IMR-90 (cell line): ENCODE measurements at regions of chr18 and their contacts with region 1.

Region 1: GRCh38 chr18:45839414-45840395 is 14.2 kb downstream of the SIGLEC15 start:
- DNase-seq: peak; percentile 80
- ATAC-seq: peak; percentile 81
- H3K4me3 ChIP-seq: no peak overlapping the region
- H3K27ac ChIP-seq: no peak overlapping the region
- H3K4me1 ChIP-seq: peaks cover 10% of the 10 kb centered on the region
- H3K27me3 ChIP-seq: no peaks in the 10 kb centered on the region
- CTCF ChIP-seq: peak; percentile 83
- POLR2A ChIP-seq: no peak
- RAD21 ChIP-seq: peak; percentile 90

Region 2: DNA sequence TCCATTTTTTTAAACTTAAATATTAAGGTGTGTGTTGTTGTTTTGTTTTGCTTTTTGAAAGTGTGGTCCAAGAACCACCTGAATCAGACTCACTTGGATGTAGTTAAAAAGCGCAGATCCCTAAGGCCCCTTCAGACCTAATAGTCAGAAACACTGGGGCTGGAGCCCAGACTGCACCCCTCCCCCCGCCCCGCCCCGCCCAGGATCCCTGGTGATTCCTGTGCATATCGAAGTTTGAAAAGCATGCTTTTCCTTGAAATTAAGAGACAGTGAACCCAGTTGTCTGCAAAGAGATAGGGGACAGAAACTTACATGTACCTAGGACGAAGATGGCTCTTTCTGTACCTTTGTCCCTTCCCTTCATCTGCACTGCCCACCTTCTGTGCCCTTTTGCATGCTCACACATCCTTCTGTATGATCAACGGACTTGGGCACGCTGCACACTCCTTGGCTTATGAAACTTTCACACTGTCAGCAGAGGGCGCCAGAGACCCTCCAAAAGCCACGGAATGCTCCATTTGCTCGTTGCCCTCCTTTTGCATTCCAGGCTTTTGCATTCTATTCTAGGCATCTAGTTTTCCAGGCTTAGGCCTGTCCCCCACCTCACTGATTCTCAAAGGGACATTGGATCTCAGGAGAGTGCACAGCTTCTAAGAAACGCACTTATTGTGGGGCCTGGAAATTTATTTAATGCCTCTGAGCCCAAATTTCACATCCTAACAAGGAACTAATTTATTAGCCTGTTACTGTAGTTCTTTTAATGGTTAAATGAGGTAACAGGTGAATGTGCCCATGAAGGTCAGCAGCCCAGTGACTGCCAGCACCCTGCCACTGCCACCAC is 148.5 kb before region 1 on chr18:
- CTCF ChIA-PET with region 1: interaction called, 3 read pairs
- POLR2A ChIA-PET with region 1: no interaction called
- dilution Hi-C with region 1: no loop called
- in situ Hi-C with region 1: loop called (anchors 5 kb)
- intact Hi-C with region 1: loop called (anchors 1 kb)
- DNase-seq: peak; percentile 76
- ATAC-seq: peak; percentile 86
- H3K4me3 ChIP-seq: no peak overlapping the region
- H3K27ac ChIP-seq: no peak overlapping the region
- H3K4me1 ChIP-seq: peaks cover 16% of the 10 kb centered on the region
- H3K27me3 ChIP-seq: no peaks in the 10 kb centered on the region
- CTCF ChIP-seq: peak; percentile 93
- POLR2A ChIP-seq: peak; percentile 67
- RAD21 ChIP-seq: peak; percentile 99

Region 3: GRCh38 chr18:45722899-45723298 is 116.8 kb before region 1 on chr18:
- CTCF ChIA-PET with region 1: interaction called, 4 read pairs
- POLR2A ChIA-PET with region 1: no interaction called
- dilution Hi-C with region 1: no loop called
- in situ Hi-C with region 1: no loop called
- intact Hi-C with region 1: loop called (anchors 1 kb)
- DNase-seq: peak; percentile 77
- ATAC-seq: peak; percentile 89
- H3K4me3 ChIP-seq: no peak overlapping the region
- H3K27ac ChIP-seq: no peak overlapping the region
- H3K4me1 ChIP-seq: peaks cover 14% of the 10 kb centered on the region
- H3K27me3 ChIP-seq: no peaks in the 10 kb centered on the region
- CTCF ChIP-seq: peak; percentile 83
- POLR2A ChIP-seq: 0 out of 2 replicates have a peak, but pooled peaks have one; percentile 31
- RAD21 ChIP-seq: peak; percentile 92

Region 4: GRCh38 chr18:45764000-45764686 is 75.6 kb before region 1 on chr18:
- CTCF ChIA-PET with region 1: no interaction called
- POLR2A ChIA-PET with region 1: no interaction called
- dilution Hi-C with region 1: no loop called
- in situ Hi-C with region 1: no loop called
- intact Hi-C with region 1: no loop called
- DNase-seq: peak; percentile 67
- ATAC-seq: no peak; the same call in none of the 2 replicates
- H3K4me3 ChIP-seq: no peak overlapping the region
- H3K27ac ChIP-seq: peak overlapping the region; percentile 26; the same call in 1 of the 2 replicates
- H3K4me1 ChIP-seq: peaks cover 16% of the 10 kb centered on the region
- H3K27me3 ChIP-seq: no peaks in the 10 kb centered on the region
- CTCF ChIP-seq: no peak
- POLR2A ChIP-seq: no peak
- RAD21 ChIP-seq: no peak

Region 5: DNA sequence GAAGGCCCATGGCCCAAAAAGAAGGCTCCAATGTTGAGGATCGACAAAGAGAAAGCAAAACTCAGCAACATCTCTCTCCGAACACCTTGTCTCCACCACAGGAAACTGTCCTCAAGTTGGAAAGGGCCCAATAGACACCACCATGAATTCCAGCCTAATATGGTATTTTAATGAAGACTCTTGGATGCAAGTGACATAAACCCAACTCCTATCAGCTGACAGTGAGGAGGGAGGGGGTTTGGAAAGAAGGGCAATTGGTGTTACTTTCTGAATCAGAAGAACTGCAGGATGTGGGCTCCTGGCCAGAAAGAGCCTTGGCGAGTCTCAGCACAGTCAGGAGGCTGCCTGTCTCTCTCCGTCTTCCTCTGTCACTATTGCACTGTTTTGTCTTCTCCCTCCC is 54.6 kb before region 1 on chr18:
- CTCF ChIA-PET with region 1: interaction called, 3 read pairs
- POLR2A ChIA-PET with region 1: no interaction called
- dilution Hi-C with region 1: no loop called
- in situ Hi-C with region 1: loop called (anchors 10 kb)
- intact Hi-C with region 1: no loop called
- DNase-seq: peak; percentile 52
- ATAC-seq: no peak
- H3K4me3 ChIP-seq: no peak overlapping the region
- H3K27ac ChIP-seq: peak overlapping the region; percentile 67
- H3K4me1 ChIP-seq: peaks cover 30% of the 10 kb centered on the region
- H3K27me3 ChIP-seq: no peaks in the 10 kb centered on the region
- CTCF ChIP-seq: no peak
- POLR2A ChIP-seq: no peak
- RAD21 ChIP-seq: no peak